Posterior vena cava (tissue), 2 donors: ENCODE measurements at regions of chr16 and their contacts with region 1.

Region 1: DNA sequence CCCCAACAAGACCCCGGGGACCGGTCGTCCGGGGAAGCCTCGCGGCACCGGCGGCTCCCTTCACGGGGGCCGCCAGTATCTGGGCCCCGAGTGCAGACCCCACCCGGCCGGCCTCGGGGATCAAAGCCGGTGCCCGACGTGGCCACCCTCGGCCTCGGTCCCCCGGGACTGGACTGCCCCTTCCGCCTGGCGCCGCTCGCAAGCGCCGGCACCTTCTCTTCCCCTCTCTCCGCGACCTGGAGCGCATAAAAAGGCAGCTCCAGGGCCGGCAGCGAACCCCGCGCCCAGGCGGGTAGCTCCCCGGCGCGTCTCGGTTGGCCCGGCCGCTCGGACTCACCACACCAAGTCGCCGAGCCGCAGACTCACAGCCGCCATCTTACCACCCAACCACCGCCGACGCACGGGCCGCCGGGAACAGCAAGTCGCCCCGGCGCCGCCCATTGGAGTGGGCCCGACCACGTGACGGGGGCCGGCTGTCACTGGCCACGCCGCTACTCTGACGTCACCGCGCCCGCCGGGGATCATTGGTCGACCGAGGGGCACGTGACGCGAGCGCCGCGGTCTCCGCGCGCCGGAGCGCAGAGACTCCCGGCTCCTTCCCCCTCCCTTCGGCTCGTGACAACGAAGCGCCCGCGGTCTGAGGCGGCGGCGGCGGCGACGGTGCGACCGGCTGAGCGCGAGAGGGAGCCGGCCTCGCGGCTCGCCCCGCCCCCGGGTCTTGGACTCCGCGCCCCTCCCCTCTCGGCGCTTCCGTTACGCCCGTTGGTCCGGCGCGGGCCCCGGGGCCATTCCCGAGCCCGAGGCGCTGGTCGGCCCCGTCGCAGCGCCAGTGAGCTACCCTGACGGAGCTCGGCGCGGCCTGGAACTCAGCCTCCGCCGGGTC is at the starts of genes GLYR1 and UBN1:
- DNase-seq: peak; percentile 100
- total RNA-seq, gene GLYR1: 72.2 to 72.3 TPM
- total RNA-seq, gene UBN1: 25.5 to 27.7 TPM

Region 2: GRCh38 chr16:4593069-4593468 is 254.1 kb before region 1 on chr16:
- intact Hi-C with region 1: no loop called
- DNase-seq: no peak

Region 3: DNA sequence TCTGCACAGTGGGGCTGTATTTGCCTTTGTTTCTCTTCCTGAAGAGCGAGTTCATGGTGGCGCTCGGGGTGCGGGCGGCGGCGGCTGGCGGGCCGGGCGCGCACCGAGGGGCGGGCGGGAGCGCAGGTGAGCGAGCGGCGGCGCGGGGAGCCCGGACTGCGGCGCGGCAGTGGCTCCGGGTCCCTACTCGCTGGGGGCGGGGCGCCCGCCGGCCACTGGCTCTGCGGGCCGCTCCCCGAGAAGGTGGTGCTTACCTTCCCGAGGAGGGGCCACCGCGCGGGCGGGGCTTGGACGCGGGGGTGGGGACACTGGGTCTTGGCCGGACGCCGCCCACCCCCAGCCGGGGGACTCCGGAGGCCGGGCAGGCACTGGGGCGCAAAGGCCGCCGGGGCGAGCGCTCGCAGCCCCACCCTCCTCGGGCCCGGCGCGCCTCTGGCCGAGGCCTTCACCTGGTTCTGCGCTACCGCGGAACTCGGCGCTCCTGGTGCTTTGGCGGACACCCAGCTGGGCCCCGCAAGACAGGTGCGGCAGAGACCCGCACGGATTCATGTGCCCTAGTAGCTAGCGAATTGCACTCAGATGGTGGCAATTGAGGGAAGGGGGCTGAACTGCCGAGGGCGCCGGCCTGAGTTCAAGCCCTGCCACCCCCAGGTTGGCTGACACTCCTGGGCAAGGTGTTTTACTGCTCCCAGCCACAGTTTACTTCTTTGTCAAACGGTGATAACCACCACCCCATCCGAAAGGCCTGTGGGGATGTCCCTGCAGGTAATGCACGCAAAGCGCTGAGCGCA is 90.1 kb after region 1 on chr16 and contains the start of gene PPL:
- intact Hi-C with region 1: loop called (anchors 5 to 10 kb)
- DNase-seq: no peak
- total RNA-seq, gene PPL: 23.8 to 24.1 TPM

Region 4: DNA sequence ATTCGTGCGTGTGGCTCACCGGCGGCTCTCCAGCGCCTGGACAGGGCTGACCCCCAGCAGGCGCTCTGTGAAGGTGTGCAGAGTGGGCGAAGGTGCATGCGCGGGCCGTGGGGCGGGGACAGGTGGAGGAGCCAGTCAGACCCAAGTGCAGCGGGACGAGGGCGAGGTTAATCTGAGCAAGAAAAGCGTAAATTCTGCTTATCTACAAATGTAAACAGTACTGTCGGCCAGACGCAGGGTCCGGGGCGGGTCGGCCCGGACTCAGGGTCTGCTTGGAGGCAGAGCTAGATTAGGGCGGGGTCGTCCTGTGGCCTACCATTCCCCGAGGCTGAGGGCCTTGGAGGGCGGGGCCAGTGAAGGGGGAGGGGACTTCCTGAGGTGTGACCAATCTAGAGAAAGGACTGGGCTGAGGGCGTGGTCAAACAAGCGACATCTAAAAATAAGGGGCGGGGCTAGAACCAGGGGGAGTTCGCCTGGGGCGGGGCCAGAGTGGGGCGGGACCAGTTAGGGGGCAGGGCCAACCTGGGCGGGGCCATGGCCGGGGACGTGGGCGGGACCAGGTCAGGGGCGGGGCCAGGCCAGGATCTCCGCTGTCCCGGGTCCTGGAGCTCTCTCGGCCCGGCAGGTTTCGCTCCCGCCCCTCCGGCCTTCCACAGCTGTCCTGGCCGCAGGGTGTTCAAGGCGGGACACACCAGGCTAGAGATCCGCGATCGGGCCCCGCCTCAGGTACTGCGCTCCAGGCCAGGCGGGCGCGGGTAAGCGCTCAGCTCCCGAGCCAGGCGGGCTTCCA is 110.8 kb after region 1 on chr16 and contains the start of gene SEC14L5:
- intact Hi-C with region 1: loop called (anchors 5 kb)
- DNase-seq: peak; percentile 98
- total RNA-seq, gene SEC14L5: 0.86 to 1.1 TPM